Activated CD4-positive, alpha-beta memory T cell treated with anti-CD3 and anti-CD28 coated beads for 36 hours (primary cell): ENCODE measurements at regions of chr2 and their contacts with region 1.

Region 1: GRCh38 chr2:201257956-201258665 is 2.2 kb upstream of the CASP8 start:
- DNase-seq: peak; percentile 96
- H3K4me3 Mint-ChIP-seq: peak overlapping the region; percentile 85
- H3K27ac Mint-ChIP-seq: peak overlapping the region; percentile 98
- H3K4me1 Mint-ChIP-seq: peaks cover 66% of the 10 kb centered on the region
- H3K27me3 Mint-ChIP-seq: no peaks in the 10 kb centered on the region

Region 2: GRCh38 chr2:200888704-200889625 is 369.1 kb before region 1 on chr2 and contains the starts of genes NIF3L1 and PPIL3:
- CTCF ChIA-PET with region 1: interaction called, 4 read pairs
- POLR2A ChIA-PET with region 1: no interaction called
- intact Hi-C with region 1: loop called (anchors 1 kb)
- DNase-seq: peak; percentile 99
- H3K4me3 Mint-ChIP-seq: peak within 1 kb of the TSS; percentile 98
- H3K27ac Mint-ChIP-seq: peak within 1 kb of the TSS; percentile 100
- H3K4me1 Mint-ChIP-seq: peaks cover 44% of the 10 kb centered on the region
- H3K27me3 Mint-ChIP-seq: no peaks in the 10 kb centered on the region
- total RNA-seq, gene NIF3L1: 30.8 to 32.7 TPM
- total RNA-seq, gene PPIL3: 84.0 to 87.9 TPM

Region 3: DNA sequence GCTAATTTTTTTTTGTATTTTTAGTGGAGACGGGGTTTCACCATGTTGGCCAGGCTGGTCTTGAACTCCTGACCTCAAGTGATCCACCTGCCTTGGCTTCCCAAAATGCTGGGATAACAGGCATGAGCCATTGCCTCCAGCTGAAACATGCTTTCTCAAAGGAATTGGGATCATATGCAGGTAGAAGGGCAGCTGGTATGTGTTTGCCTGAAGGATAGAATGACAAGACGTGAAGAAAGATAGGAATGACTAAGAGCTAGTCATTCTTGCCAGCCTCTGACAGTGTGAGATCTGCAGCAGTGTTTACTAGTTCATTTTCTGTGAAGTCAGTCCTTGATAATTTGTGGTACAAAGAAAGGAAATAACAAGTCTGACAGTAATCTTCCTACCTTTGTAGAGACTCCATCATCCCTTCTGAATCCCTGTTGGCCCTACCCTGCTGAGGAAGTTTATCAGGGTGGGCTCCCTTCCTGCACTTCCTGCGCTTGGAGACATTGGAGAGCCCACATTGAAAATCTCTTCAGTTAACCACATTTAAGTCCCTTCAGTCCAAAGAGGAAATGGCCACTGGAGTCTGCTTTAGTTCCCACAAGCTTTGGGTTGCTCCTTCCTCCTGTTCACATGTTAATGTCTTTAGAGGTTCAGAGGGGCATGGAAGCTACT is 127.5 kb before region 1 on chr2:
- CTCF ChIA-PET with region 1: no interaction called
- POLR2A ChIA-PET with region 1: interaction called, 10 read pairs
- intact Hi-C with region 1: loop called (anchors 1 kb)
- DNase-seq: peak; percentile 55
- H3K4me3 Mint-ChIP-seq: peak overlapping the region; percentile 92
- H3K27ac Mint-ChIP-seq: peak overlapping the region; percentile 94
- H3K4me1 Mint-ChIP-seq: peaks cover 54% of the 10 kb centered on the region
- H3K27me3 Mint-ChIP-seq: no peaks in the 10 kb centered on the region

Region 4: GRCh38 chr2:201363857-201364560 is 105.9 kb after region 1 on chr2:
- CTCF ChIA-PET with region 1: interaction called, 7 read pairs
- POLR2A ChIA-PET with region 1: no interaction called
- intact Hi-C with region 1: loop called (anchors 1 kb)
- DNase-seq: peak; percentile 32
- H3K4me3 Mint-ChIP-seq: no peak overlapping the region
- H3K27ac Mint-ChIP-seq: no peak overlapping the region
- H3K4me1 Mint-ChIP-seq: peaks cover 24% of the 10 kb centered on the region
- H3K27me3 Mint-ChIP-seq: no peaks in the 10 kb centered on the region

Region 5: GRCh38 chr2:201451292-201452057 is 193.4 kb after region 1 on chr2 and contains the starts of genes STRADB and TRAK2:
- CTCF ChIA-PET with region 1: interaction called, 3 read pairs
- POLR2A ChIA-PET with region 1: interaction called, 4 read pairs
- intact Hi-C with region 1: loop called (anchors 1 kb)
- DNase-seq: peak; percentile 98
- H3K4me3 Mint-ChIP-seq: peak within 1 kb of the TSS; percentile 96
- H3K27ac Mint-ChIP-seq: peak within 1 kb of the TSS; percentile 97
- H3K4me1 Mint-ChIP-seq: peaks cover 44% of the 10 kb centered on the region
- H3K27me3 Mint-ChIP-seq: no peaks in the 10 kb centered on the region
- total RNA-seq, gene STRADB: 18.5 to 19.8 TPM
- total RNA-seq, gene TRAK2: 23.5 to 26.0 TPM

Region 6: GRCh38 chr2:202265467-202266277 is 1007.6 kb after region 1 on chr2 and contains the start of gene NOP58:
- CTCF ChIA-PET with region 1: no interaction called
- POLR2A ChIA-PET with region 1: no interaction called
- intact Hi-C with region 1: loop called (anchors 5 kb)
- DNase-seq: peak; percentile 96
- H3K4me3 Mint-ChIP-seq: peak within 1 kb of the TSS; percentile 49
- H3K27ac Mint-ChIP-seq: peak within 1 kb of the TSS; percentile 70
- H3K4me1 Mint-ChIP-seq: peaks cover 19% of the 10 kb centered on the region
- H3K27me3 Mint-ChIP-seq: no peaks in the 10 kb centered on the region
- total RNA-seq, gene NOP58: 151 to 155 TPM